Activated CD4-positive, alpha-beta T cell treated with anti-CD3 and anti-CD28 coated beads for 36 hours (primary cell): ENCODE measurements at regions of chr6 and their contacts with region 1.

Region 1: GRCh38 chr6:16128759-16129622 is at the start of gene MYLIP:
- DNase-seq: peak; percentile 98
- ATAC-seq: peak; percentile 82
- H3K4me3 Mint-ChIP-seq: peak within 1 kb of the TSS; percentile 90
- H3K27ac Mint-ChIP-seq: peak within 1 kb of the TSS; percentile 86
- H3K4me1 Mint-ChIP-seq: peaks cover 24% of the 10 kb centered on the region
- H3K27me3 Mint-ChIP-seq: no peaks in the 10 kb centered on the region
- total RNA-seq, gene MYLIP: 9.2 to 10.6 TPM

Region 2: DNA sequence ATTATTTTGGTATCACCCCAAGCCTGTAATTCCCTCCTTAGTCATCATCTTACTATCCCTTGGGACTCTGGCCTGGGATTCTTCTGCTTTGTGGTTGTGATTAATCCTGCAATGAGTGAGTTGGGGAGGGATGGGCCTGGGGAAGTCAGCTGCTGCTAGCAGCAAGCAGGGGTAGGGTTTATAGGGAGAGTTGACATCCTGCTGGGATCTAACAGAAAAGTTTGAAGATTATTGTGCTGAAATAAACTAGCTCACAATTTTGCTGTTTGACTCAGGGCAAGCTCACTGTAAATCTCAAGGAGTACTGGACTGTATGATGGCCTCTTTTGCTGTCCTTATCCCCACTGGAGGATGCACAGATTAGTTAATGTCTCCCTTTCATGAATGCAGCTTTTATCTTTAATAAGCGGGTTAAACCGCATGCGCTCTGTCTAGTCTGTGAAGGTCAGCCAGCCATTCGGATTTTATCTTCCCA is 799.8 kb before region 1 on chr6:
- CTCF ChIA-PET with region 1: no interaction called
- POLR2A ChIA-PET with region 1: no interaction called
- intact Hi-C with region 1: no loop called
- DNase-seq: no peak
- ATAC-seq: no peak
- H3K4me3 Mint-ChIP-seq: no peak overlapping the region
- H3K27ac Mint-ChIP-seq: no peak overlapping the region
- H3K4me1 Mint-ChIP-seq: peaks cover 90% of the 10 kb centered on the region
- H3K27me3 Mint-ChIP-seq: no peaks in the 10 kb centered on the region

Region 3: DNA sequence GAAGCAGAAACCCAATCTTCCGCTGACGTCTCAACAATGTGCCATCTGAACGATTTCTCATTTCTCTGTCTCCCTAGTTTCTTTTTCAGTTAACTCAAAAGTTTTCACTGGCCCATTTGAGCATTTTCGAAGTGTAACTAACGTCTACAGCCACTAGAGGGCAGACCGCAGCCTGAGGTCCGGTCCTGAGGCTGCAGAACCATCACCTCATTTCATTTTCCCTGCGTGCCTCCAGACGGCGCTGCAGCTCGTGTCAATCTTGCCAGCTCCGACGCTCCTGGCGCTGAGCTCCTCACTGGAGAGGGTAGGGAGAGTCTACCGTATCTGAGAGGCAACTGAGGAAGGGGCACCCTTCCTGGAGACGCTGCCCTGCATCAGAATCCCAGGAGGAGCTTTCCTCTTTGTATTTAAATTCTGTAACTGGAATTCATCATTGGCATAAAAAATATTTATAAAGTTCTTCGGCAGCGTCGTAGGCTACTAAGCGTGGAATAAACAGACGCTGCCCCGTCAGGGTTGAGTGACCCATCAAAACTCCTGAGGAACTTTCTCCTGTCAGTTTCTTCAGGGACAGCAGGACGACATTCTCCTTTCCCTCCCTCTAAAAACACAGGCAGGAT is 437.6 kb before region 1 on chr6:
- CTCF ChIA-PET with region 1: interaction called, 5 read pairs
- POLR2A ChIA-PET with region 1: interaction called, 4 read pairs
- intact Hi-C with region 1: loop called (anchors 1 kb)
- DNase-seq: peak; percentile 91
- ATAC-seq: peak; percentile 99
- H3K4me3 Mint-ChIP-seq: no peak overlapping the region
- H3K27ac Mint-ChIP-seq: peak overlapping the region; percentile 61
- H3K4me1 Mint-ChIP-seq: peaks cover 14% of the 10 kb centered on the region
- H3K27me3 Mint-ChIP-seq: peaks cover 7% of the 10 kb centered on the region

Region 4: DNA sequence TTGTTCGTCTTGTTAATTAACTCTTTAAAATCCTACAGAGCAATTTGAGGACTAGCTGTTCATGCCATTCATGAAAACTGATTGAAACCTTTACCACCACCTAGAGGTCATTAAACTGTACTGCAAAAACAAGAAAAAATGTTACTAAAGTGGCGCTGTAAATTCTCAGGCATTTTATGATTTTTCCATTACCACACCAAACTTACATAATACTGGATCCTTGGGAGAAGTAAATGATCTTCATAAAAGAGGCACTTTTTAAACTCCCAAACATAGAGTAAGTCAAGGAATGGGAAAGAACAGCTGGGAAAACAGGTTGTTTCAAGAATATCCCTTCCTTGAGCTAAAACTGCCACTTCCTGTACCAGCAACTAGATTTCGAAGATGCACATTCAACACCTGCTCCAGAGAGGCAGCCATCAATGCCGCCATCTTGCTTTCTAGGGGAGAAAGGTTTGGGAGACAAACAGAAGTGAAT is 54.2 kb after region 1 on chr6:
- CTCF ChIA-PET with region 1: interaction called, 13 read pairs
- POLR2A ChIA-PET with region 1: interaction called, 4 read pairs
- intact Hi-C with region 1: loop called (anchors 1 to 2 kb)
- DNase-seq: no peak
- ATAC-seq: peak; percentile 48
- H3K4me3 Mint-ChIP-seq: no peak overlapping the region
- H3K27ac Mint-ChIP-seq: no peak overlapping the region
- H3K4me1 Mint-ChIP-seq: peaks cover 21% of the 10 kb centered on the region
- H3K27me3 Mint-ChIP-seq: peaks cover under 1% of the 10 kb centered on the region

Region 5: GRCh38 chr6:16420715-16421461 is 291.9 kb after region 1 on chr6:
- CTCF ChIA-PET with region 1: no interaction called
- POLR2A ChIA-PET with region 1: no interaction called
- intact Hi-C with region 1: loop called in 1 of 2 experiments (anchors 10 kb)
- DNase-seq: peak; percentile 66
- ATAC-seq: peak; percentile 82
- H3K4me3 Mint-ChIP-seq: peak overlapping the region; percentile 58
- H3K27ac Mint-ChIP-seq: peak overlapping the region; percentile 94
- H3K4me1 Mint-ChIP-seq: peaks cover 53% of the 10 kb centered on the region
- H3K27me3 Mint-ChIP-seq: no peaks in the 10 kb centered on the region